ENCODE measurements at regions of chr10 and their contacts with region 1.

Region 1: DNA sequence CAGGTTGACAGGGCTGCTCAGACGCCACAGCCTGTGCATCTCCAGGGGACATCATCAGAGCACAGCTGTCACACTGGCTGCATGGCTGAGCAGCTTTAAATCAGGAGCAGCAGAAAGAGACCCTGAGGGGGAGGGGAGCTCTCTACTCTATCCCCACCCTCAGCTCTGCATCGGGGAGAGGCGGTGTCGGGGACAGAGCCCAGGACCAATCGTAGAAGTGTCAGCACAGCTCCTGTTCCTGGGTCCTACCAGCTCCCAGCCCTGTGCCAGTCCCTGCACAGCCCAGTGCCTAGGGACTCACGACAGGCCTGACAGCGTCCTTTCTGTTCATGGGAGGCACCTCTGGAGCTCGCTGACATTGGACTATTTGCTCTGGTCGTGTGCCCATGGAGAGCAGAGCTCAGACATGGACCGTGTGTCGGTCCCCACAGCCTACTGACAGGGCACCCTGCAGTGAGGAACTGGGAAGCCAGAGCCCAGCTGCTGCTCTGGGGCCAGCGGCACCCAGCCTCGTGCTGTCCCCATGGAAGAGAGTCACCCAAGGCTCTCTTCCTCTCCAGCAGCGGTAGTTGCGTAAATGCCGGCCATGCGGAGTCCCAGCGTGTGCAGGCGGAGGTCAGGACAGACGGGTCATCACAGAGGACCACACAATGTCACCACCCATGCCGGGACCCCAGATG is 20.4 kb upstream of the ANTXRL start:
- DNase-seq: no peak
- H3K4me3 ChIP-seq: no peak overlapping the region
- H3K27me3 ChIP-seq: no peaks in the 10 kb centered on the region
- CTCF ChIP-seq: no peak

Region 2: DNA sequence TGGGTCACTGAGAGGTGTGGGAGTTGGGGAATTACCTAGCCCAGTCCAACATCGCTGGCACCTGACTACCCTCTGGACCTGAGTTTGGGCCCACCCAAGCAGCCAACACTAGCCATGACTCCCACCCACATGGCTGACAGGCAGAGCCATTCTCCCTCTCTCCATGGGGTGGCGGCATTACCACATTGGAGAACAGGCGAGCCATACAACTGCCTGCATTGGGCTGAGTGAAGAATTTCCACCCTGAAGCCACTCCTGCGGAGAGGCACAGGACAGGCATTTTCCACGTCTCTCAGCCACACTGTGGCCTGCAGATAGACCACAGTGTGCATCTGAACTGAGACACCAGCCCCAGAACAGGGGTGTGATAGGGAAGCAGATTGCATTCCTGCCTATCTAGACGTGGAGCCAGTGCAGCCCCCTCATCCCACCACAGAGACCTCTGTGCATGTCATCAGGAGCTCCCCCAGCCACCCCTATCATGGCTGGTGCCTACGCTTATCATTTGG is 37.8 kb before region 1 on chr10:
- CTCF ChIA-PET with region 1: interaction called, 16 read pairs
- POLR2A ChIA-PET with region 1: no interaction called
- DNase-seq: peak; percentile 9
- H3K4me3 ChIP-seq: no peak overlapping the region
- H3K27me3 ChIP-seq: peaks cover 8% of the 10 kb centered on the region
- CTCF ChIP-seq: peak; percentile 96